Right ventricle myocardium inferior (tissue), 1 donor: ENCODE measurements at regions of chr2 and their contacts with region 1.

Region 1: DNA sequence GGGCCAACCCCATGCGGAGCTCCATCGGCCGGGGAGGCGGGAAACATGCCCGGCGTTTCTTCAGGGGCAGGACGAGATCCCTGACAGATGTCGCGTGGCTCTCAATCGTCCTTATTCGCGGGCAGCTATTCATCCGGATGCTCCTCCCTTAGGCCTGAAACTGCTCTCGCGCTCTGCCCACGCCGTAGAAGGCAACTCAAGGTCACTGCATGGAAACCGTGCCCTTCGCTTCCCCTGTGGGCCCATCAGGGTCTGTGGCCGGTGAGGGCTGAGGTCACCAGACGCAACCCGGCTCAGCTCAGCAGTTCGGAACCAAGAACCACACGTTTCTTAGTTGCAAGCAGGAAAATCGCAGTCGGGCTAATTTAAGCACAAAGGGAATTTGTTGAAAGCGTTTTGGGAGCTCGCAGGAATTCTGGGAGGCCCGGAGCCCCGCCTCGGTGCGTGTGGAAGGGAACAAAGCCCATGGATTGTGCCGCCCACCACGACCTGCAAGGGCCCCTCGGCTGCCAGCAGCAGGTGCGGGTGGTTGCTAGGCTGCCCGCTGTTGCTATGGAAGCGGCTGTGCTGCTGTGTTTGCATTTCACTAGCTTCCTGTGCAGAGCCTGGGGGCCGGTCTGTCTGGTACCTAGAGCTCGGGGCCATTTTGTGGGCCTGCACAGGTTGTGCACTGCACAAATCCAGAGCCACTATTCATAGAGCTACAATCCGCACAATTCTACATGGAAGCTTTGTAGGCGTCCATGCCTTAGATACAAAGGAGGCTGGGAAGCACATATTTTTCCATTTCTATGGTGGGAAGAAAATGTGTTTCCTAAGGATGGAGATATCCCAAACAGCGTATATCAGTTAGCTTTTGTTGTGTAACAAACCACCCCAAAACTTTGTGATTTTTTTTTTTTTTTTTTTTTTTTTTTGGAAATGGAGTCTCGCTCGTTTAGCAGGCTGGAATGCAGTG is 6.0 kb upstream of the ALLC start:
- DNase-seq: no peak
- ATAC-seq: peak; percentile 35

Region 2: DNA sequence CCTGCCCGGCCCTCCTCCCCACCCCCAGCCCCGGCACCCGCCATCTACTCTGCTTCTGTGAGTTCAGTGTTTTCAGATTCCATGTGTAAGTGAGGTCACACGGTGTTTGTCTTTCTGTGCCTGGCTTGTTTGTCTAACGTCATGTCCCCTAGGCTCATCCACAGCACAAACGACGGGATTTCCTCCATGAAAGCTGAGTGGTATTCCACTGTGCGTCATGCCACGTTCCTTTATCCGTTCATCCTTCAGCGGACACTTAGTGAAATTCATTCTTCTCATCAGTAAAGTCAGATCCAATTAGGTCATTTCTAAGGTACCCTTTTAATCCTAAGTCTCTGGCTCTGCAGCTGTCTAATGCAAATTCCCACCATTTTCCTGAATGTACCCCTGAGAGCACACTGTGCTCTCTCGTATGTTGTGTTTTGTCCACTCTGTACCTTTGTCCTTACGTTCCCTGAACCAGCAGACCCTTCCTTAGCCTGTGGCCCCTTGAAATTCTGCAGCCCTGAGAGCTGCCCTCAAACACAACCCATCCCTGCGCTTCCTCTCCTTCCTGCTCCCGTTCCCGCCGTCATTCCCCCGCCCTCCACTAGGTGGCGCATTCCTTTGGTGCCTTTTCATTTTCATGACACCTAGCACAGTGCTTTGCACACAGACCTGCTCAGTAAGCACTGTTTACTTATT is 228.3 kb before region 1 on chr2:
- intact Hi-C with region 1: loop called (anchors 5 kb)
- DNase-seq: peak; percentile 83
- ATAC-seq: peak; percentile 55

Region 3: GRCh38 chr2:3535794-3536681 is 115.9 kb before region 1 on chr2:
- intact Hi-C with region 1: no loop called
- DNase-seq: peak; percentile 78
- ATAC-seq: peak; percentile 86

Region 4: GRCh38 chr2:3585261-3586109 is 66.5 kb before region 1 on chr2:
- intact Hi-C with region 1: loop called (anchors 5 kb)
- DNase-seq: peak; percentile 80
- ATAC-seq: peak; percentile 90

Region 5: GRCh38 chr2:3959372-3959771 is 307.4 kb after region 1 on chr2:
- intact Hi-C with region 1: no loop called
- DNase-seq: no peak
- ATAC-seq: no peak